OCI-LY7 (cell line): ENCODE measurements at regions of chr2 and their contacts with region 1.

Region 1: DNA sequence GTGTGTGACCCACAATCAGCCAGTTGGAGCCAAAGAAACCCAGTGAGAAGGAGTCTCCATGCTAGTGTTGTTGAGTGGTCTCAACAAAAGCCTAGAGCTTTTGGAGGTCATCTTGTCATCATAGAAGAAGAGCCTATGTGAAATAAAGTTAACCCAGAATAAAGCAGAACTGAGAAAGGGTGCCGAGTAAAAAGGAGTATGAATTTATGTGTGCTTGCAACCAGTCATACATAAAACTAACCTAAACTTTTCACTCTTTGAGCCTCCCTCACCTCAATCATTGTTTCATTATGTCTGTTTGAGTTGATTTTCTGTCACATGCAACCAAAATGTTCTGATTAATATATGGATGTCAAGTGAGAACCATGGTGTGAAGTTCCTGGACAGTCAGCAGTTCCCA is 599.3 kb upstream of the ZEB2 start:
- DNase-seq: no peak
- H3K4me3 ChIP-seq: no peak overlapping the region
- H3K27ac ChIP-seq: no peak overlapping the region
- H3K4me1 ChIP-seq: no peaks in the 10 kb centered on the region
- CTCF ChIP-seq: no peak

Region 2: DNA sequence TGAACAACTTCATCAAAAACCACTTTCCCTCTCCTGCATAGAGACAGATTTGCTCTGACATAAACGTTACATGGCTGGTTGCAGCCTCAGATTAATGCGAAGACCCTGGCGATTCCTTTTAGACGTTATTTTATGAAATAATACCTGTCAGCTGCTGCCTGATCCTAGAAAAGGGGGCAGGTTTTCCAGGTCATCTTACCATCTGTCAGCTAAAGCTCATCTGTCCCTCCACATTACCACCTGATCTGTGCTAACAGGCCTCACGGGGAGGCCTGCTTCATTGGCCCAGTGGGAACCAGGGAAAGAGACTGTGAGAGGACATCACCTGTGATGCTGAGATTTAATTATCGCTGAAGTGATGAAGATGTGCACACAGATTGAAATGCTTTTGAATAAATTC is 1729.1 kb before region 1 on chr2:
- CTCF ChIA-PET with region 1: no interaction called
- POLR2A ChIA-PET with region 1: no interaction called
- intact Hi-C with region 1: loop called (anchors 5 kb)
- DNase-seq: no peak
- H3K4me3 ChIP-seq: no peak overlapping the region
- H3K27ac ChIP-seq: no peak overlapping the region
- H3K4me1 ChIP-seq: no peaks in the 10 kb centered on the region
- CTCF ChIP-seq: no peak

Region 3: GRCh38 chr2:144686518-144687215 is 432.6 kb before region 1 on chr2:
- CTCF ChIA-PET with region 1: no interaction called
- POLR2A ChIA-PET with region 1: no interaction called
- intact Hi-C with region 1: no loop called
- DNase-seq: peak; percentile 53
- H3K4me3 ChIP-seq: no peak overlapping the region
- H3K27ac ChIP-seq: peak overlapping the region; percentile 31
- H3K4me1 ChIP-seq: peaks cover 63% of the 10 kb centered on the region
- CTCF ChIP-seq: no peak

Region 4: DNA sequence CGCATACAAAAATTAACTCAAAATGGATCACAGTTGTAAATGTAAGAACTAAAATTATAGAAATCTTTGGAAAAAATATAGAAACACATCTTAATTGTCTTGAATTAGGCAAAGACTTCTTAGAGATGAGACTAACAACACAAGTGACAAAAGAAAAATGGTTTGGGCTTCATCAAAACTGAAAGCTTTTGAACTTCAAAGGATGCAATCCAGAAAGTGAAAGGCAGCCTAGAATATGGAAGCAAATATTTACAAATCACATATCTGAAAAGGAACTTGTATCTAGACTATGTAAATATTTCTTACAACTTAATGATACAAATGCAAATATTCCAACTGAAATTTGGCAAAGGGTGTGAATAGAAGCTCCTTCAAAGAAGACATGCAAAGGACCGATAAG is 16.5 kb before region 1 on chr2:
- CTCF ChIA-PET with region 1: no interaction called
- POLR2A ChIA-PET with region 1: interaction called, 10 read pairs
- intact Hi-C with region 1: no loop called
- DNase-seq: no peak
- H3K4me3 ChIP-seq: no peak overlapping the region
- H3K27ac ChIP-seq: no peak overlapping the region
- H3K4me1 ChIP-seq: no peaks in the 10 kb centered on the region
- CTCF ChIP-seq: no peak

Region 5: DNA sequence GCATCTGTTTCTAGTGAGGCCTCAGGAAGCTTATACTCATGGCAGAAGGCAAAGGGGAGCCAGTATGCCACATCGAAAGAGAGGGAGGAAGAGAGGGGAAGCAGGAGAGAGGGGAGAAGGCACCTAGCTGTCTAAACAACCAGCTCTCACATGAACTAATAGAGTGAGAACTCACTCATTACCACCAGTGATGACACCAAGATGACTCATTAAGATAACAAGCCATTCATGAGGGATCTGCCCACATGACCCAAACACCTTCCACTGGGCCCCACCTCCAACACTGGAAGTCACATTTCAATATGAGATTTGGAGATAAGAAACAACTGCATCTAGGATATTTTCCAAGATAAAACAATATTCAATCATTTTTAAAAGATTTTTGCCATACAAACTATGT is 154.6 kb after region 1 on chr2:
- CTCF ChIA-PET with region 1: no interaction called
- POLR2A ChIA-PET with region 1: no interaction called
- intact Hi-C with region 1: no loop called
- DNase-seq: no peak
- H3K4me3 ChIP-seq: no peak overlapping the region
- H3K27ac ChIP-seq: no peak overlapping the region
- H3K4me1 ChIP-seq: no peaks in the 10 kb centered on the region
- CTCF ChIP-seq: no peak